Activated CD4-positive, alpha-beta memory T cell treated with anti-CD3 and anti-CD28 coated beads, Interleukin-2, amount 10 ng/mL, durations not matched to agents 7 days and 5 days (primary cell): ENCODE measurements at regions of chr3 and their contacts with region 1.

Region 1: DNA sequence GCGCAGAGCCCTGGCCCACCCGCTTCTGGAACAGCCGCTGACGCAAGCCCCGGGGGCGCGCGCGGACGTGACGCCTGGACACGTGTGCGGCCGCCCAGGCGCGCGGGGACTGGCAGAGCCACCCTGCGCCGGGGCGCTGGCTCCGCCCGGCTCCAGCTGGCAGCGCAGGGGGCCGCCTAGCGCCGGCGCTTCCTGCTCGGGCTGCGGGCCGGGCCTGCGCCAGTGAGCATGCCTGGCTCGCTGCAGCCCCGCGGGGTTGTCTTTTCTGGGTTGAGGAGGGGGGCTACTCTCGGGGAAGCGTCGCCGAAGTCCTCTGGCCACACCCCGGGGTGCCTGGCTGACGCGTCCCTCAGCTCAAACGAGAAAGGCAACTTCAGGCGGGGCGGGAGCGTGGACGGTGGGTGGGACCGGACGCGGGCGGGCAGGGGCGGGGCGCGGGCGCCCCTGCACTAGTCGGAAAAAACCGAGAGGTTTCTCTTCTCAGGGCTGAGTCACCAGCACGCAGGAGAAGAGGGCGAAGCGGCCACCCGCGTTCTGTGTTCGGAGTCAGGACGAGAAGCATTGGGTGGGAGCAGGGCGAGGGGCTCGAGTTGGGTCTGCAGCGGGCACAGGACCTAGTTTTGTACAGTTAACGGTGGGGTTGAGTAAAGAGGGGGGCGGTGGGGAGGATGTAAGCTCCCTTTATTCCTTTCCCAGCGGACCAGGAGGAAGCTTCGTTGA is at the start of gene SIAH2:
- DNase-seq: peak; percentile 93
- H3K4me3 Mint-ChIP-seq: peak within 1 kb of the TSS; percentile 97
- H3K27ac Mint-ChIP-seq: peak within 1 kb of the TSS; percentile 100
- H3K4me1 Mint-ChIP-seq: peaks cover 45% of the 10 kb centered on the region
- H3K27me3 Mint-ChIP-seq: no peaks in the 10 kb centered on the region
- total RNA-seq, gene SIAH2: 42.5 to 44.9 TPM

Region 2: DNA sequence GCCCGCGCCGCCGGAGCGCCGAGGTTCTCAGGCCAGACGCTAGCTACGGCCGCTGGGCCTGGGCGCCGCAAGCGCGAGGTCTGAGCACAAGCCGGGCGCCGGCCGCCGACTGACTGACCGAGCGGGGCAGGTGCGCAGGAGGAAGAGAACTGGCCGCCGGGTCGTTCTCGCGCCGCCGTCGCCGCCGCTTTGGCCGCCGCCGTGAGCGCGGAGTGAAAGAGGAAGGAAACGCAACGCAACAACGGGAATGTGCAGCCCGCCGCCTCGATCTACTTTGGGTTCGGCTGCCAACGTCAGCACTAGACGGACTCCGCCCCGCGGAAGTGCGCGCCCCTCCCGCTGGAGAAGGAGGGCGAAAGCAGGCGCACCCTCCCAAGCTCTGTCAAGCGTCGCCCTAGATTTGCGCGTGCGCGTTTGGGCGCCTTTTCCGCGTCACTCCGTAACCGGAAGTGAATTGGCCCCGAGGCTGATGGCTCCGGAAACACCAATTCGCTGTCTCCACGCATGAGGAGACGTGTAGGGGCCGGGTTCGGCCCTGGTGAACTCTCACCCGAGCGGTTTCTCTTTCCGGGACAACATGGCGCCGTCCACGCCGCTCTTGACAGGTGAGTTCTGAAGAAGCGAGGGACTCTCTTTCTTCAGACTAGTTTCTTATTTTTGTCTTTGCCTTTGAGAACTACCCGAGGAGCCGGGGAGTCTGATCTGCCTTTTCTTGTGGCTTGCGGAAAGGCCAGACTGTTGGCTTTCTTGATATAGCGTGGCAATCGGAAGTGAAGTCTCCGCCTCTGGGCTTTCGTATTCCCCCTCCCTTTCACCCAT is 216.8 kb before region 1 on chr3 and contains the starts of genes EIF2A and SERP1:
- CTCF ChIA-PET with region 1: interaction called, 3 read pairs
- POLR2A ChIA-PET with region 1: interaction called, 156 read pairs
- DNase-seq: peak; percentile 99
- H3K4me3 Mint-ChIP-seq: peak within 1 kb of the TSS; percentile 85
- H3K27ac Mint-ChIP-seq: peak within 1 kb of the TSS; percentile 97
- H3K4me1 Mint-ChIP-seq: peaks cover 61% of the 10 kb centered on the region
- H3K27me3 Mint-ChIP-seq: no peaks in the 10 kb centered on the region
- total RNA-seq, gene EIF2A: 81.7 to 86.4 TPM
- total RNA-seq, gene SERP1: 98.4 to 98.5 TPM

Region 3: DNA sequence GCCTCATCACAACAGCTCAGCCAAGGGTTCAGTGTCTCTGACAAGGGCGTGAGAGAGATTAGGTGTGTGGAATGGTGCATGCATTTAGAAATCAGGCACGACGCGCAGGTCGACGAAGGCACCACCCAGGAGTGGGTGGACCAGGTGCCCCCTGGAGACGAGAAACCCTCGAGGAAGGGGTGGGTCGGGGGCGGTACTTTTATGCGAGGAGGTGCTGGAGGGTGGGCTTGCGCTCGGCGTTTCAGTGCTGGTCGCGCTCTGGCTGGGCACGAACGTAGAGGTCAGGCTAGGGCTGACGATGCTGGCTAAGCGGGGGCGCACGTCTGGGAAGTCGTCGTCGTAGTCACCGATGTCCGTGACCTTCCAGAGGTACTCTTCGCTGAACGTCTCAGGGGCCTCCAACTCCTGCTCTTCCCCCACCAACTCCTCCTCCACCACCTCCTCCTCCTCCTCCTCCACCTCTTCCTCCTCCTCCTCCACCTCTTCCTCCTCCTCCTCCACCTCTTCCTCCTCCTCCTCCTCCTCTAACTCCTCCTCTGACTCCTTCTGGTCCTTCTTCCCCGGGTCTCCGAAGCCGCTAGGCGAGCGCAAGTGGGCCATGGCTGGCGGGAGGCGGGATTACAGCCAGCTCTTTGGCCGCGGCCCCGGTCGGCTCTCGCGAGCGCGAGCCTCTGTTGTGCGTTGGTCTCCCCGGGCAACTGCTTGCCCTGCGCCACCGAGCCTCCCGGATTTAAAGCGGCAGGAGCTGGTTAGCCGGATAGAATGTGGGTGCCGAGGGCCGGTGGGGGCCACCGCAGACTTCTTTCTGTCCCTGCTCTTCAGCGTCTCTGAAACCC is 59.8 kb before region 1 on chr3 and contains the start of gene ERICH6:
- CTCF ChIA-PET with region 1: interaction called, 12 read pairs
- POLR2A ChIA-PET with region 1: interaction called, 41 read pairs
- DNase-seq: peak; percentile 89
- H3K4me3 Mint-ChIP-seq: peak within 1 kb of the TSS; percentile 83
- H3K27ac Mint-ChIP-seq: peak within 1 kb of the TSS; percentile 86
- H3K4me1 Mint-ChIP-seq: peaks cover 29% of the 10 kb centered on the region
- H3K27me3 Mint-ChIP-seq: peaks cover 6% of the 10 kb centered on the region
- total RNA-seq, gene ERICH6: 0.38 to 0.81 TPM

Region 4: DNA sequence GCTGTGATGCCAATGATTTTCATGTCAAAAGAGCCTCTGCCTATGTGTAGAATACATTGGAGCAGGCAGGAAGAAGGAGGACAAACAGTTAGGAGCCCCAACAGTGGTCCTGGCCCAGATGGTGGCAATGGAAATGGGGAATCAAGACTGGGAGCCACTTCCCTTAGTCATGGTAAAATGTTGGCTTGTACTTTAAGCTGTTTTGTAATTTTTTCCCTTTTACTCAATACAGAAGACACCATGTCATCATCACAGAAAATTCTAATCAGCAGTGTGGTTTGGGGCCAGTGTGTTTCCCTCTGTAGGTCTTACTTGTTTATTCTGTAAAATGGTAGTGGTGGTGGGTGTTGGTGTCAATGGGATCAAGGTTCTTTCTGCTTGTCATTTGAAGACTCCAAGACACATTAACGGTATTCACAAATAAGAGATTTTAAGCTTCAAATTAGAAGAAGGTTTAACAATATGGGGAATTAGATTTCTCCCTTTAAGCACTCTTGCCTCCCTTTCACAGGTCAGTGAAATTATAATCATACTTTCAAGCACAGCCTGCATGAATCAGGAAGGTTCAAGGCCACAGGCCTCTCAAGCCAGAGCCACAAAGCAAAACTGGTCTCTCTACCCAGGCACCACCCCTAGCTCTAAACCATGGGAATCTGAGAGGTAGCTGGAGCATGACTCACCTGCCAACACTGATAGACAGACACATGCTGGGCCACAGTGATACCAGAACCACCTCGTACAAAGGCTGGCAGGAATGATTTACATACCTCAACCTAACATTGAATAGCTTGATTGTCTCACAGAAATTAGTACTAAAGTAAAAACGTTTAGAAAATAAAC is 25.2 kb before region 1 on chr3:
- CTCF ChIA-PET with region 1: interaction called, 4 read pairs
- POLR2A ChIA-PET with region 1: interaction called, 39 read pairs
- DNase-seq: peak; percentile 34
- H3K4me3 Mint-ChIP-seq: no peak overlapping the region
- H3K27ac Mint-ChIP-seq: peak overlapping the region; percentile 44
- H3K4me1 Mint-ChIP-seq: peaks cover 64% of the 10 kb centered on the region
- H3K27me3 Mint-ChIP-seq: no peaks in the 10 kb centered on the region

Region 5: DNA sequence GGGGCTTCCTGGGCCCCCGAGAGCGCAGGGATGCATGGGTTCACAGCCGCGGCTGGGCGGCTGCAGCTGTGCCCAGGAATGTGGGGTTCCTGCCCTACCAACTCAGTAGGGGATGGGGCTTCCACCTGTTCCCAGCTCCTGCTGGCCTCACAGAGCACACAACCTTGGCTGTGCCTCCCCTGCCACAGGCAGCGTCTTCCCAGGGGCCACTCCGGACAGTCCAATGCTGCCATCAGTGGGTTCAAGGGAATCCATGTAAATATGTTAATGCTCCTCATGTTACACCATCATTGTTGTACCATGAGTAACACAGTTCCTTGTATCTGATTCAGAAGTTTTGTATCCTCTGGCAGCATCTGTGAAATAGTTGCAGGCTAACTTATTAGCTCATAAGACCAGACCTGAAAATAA is 11.8 kb after region 1 on chr3:
- CTCF ChIA-PET with region 1: interaction called, 12 read pairs
- POLR2A ChIA-PET with region 1: interaction called, 53 read pairs
- DNase-seq: no peak
- H3K4me3 Mint-ChIP-seq: no peak overlapping the region
- H3K27ac Mint-ChIP-seq: no peak overlapping the region
- H3K4me1 Mint-ChIP-seq: no peaks in the 10 kb centered on the region
- H3K27me3 Mint-ChIP-seq: no peaks in the 10 kb centered on the region

Region 6: GRCh38 chr3:150806185-150806835 is 43.0 kb after region 1 on chr3:
- CTCF ChIA-PET with region 1: no interaction called
- POLR2A ChIA-PET with region 1: no interaction called
- DNase-seq: no peak
- H3K4me3 Mint-ChIP-seq: no peak overlapping the region
- H3K27ac Mint-ChIP-seq: no peak overlapping the region
- H3K4me1 Mint-ChIP-seq: no peaks in the 10 kb centered on the region
- H3K27me3 Mint-ChIP-seq: peaks cover 19% of the 10 kb centered on the region

Region 7: GRCh38 chr3:151203051-151203420 is 439.8 kb after region 1 on chr3 and contains the start of gene GPR171:
- CTCF ChIA-PET with region 1: no interaction called
- POLR2A ChIA-PET with region 1: interaction called, 61 read pairs
- DNase-seq: peak; percentile 82
- H3K4me3 Mint-ChIP-seq: peak within 1 kb of the TSS; percentile 90
- H3K27ac Mint-ChIP-seq: peak within 1 kb of the TSS; percentile 98
- H3K4me1 Mint-ChIP-seq: peaks cover 60% of the 10 kb centered on the region
- H3K27me3 Mint-ChIP-seq: no peaks in the 10 kb centered on the region
- total RNA-seq, gene GPR171: 204 to 222 TPM